Caco-2 (cell line): ENCODE measurements at regions of chr16 and their contacts with region 1.

Region 1: DNA sequence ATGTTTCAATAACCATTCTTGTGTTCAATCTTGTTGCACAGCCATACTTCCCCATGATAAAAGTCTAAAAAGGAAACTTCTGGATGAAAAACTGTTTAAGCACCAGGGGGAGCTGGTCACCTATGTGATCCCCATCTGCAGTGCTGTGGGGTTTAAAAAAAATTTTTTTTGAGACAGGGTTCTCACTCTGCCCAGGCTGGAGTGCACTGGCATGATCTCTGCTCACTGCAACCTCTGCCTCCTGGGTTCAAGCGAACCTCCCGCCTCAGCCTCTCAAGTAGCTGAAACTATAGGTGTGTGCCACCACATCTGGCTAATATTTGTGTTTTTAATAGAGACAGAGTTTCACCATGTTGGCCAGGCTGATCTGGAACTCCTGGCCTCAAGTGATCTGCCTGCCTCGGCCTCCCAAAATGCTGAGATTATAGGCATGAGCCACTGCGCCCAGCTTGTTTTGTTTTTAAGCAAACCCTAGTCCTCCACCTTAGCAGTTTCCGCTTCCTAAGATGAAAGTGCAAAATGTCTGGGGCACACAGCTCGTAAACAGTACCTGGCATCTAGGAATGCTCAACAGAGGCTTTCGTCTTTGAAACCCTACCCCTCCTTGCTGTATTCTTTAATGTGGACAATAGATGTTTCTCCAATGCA is 25.4 kb downstream of the DNAJA2 start:
- DNase-seq: peak in 1 of 2 experiments; percentile 61
- H3K4me3 ChIP-seq: no peak overlapping the region
- H3K4me3 Mint-ChIP-seq: no peak overlapping the region
- H3K27ac Mint-ChIP-seq: no peak overlapping the region
- H3K4me1 ChIP-seq: peaks cover 14% of the 10 kb centered on the region
- H3K4me1 Mint-ChIP-seq: no peaks in the 10 kb centered on the region
- H3K27me3 ChIP-seq: no peaks in the 10 kb centered on the region
- H3K27me3 Mint-ChIP-seq: no peaks in the 10 kb centered on the region
- CTCF ChIP-seq: peak; percentile 59 to 67

Region 2: DNA sequence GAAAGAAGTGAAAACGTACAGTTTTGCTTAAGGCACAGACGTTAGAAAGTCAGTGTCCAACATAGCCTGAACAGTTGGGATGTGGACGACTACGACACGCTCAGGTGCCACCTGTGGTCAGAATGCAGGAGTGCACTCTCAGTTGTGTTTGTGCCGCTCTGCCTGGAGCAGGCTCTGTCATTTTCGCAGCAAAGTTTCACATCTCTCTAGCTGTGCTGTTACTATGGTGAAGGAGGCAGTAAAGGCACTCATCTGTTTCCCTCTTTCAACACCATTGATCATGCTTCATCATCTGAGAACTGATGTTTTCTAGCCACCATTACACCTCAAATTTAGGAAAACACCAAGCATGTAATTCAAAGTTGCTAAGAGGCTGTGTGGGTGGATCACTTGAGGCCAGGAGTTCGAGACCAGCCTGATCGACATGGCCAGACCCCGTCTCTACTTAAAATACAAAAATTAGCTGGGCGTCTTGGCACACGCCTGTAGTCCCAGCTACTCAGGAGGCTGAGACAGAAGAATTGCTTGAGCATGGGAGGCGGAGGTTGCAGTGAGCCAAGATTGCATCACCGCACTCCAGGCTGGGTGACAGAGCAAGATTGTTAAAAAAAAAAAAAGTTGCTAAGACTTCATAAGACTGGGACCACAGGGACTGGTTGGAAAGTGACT is 70.3 kb after region 1 on chr16:
- CTCF ChIA-PET with region 1: interaction called, 3 read pairs
- POLR2A ChIA-PET with region 1: no interaction called
- intact Hi-C with region 1: loop called (anchors 1 kb)
- DNase-seq: peak; percentile 72 to 75
- H3K4me3 ChIP-seq: no peak overlapping the region
- H3K4me3 Mint-ChIP-seq: no peak overlapping the region
- H3K27ac Mint-ChIP-seq: no peak overlapping the region
- H3K4me1 ChIP-seq: no peaks in the 10 kb centered on the region
- H3K4me1 Mint-ChIP-seq: no peaks in the 10 kb centered on the region
- H3K27me3 ChIP-seq: no peaks in the 10 kb centered on the region
- H3K27me3 Mint-ChIP-seq: no peaks in the 10 kb centered on the region
- CTCF ChIP-seq: peak; percentile 45 to 75

Region 3: GRCh38 chr16:47037746-47038458 is 89.9 kb after region 1 on chr16:
- CTCF ChIA-PET with region 1: interaction called, 6 read pairs
- POLR2A ChIA-PET with region 1: no interaction called
- intact Hi-C with region 1: loop called (anchors 5 kb)
- DNase-seq: peak; percentile 84 to 93
- H3K4me3 ChIP-seq: peak overlapping the region; percentile 69
- H3K4me3 Mint-ChIP-seq: peak overlapping the region; percentile 75
- H3K27ac Mint-ChIP-seq: no peak overlapping the region
- H3K4me1 ChIP-seq: no peaks in the 10 kb centered on the region
- H3K4me1 Mint-ChIP-seq: no peaks in the 10 kb centered on the region
- H3K27me3 ChIP-seq: no peaks in the 10 kb centered on the region
- H3K27me3 Mint-ChIP-seq: peaks cover 2% of the 10 kb centered on the region
- CTCF ChIP-seq: peak; percentile 87 to 92